Pancreas (tissue), 10 donors: ENCODE measurements at regions of chr13 and their contacts with region 1.

Region 1: DNA sequence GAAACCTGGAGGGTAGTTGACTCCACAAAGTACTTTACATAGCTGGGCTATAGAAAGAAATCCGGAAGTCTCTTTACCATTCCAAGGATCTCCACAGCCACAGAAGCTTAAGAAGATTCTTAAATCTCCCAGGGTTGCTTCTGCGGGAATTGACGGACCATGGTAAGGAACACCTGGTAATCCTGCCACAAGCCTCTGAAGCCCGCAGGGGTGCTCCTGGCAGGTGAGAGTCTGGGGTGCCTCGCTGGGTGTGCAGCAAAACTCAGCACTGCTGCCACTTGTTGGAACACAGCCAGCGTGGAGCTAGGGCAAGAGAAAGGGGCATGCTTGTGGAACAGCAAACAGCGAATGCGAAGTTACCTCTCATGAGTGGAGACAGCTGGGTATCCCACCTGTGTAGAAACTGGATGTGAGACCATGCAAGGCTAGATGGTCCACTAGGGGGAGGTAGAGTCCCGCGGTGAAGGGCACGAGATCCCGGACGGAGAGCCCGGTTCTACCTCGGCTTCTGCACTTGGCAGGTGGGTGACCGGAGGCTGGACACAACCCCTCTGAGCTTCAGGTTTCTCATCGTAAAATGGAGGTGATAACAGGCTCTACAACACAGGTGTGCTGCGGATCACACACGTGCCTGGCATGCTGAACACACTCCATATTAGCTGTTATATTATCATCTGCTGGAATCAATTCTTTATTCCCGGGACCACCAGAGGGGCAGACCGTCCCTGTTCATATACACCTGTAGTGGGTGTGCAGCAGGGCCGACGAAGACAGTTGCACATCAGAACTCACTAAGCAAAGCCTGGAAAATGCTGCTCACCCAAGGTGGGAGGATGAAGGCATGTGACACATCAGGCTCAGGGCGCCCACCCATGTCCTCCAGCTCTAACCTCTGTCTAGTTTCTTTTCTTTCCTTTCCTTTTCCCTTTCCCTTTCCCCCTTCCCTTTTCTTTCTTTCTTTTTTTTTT is 24.1 kb upstream of the UBAC2 start:
- DNase-seq: peak; percentile 50 to 84 (median 76)
- ATAC-seq: peak; percentile 87 to 100 (median 98)
- H3K4me3 ChIP-seq: no peak overlapping the region
- H3K27ac ChIP-seq: no peak overlapping the region
- H3K4me1 ChIP-seq: no peaks in the 10 kb centered on the region
- H3K27me3 ChIP-seq: no peaks in the 10 kb centered on the region
- CTCF ChIP-seq: peak; percentile 87 to 93 (median 91)

Region 2: GRCh38 chr13:97946951-97947588 is 1229.5 kb before region 1 on chr13:
- intact Hi-C with region 1: no loop called
- DNase-seq: no peak
- ATAC-seq: no peak
- H3K4me3 ChIP-seq: no peak overlapping the region
- H3K27ac ChIP-seq: no peak overlapping the region
- H3K4me1 ChIP-seq: no peaks in the 10 kb centered on the region
- H3K27me3 ChIP-seq: no peaks in the 10 kb centered on the region
- CTCF ChIP-seq: no peak

Region 3: GRCh38 chr13:98685146-98685545 is 491.4 kb before region 1 on chr13:
- intact Hi-C with region 1: no loop called
- DNase-seq: no peak
- ATAC-seq: no peak
- H3K4me3 ChIP-seq: no peak overlapping the region
- H3K27ac ChIP-seq: no peak overlapping the region
- H3K4me1 ChIP-seq: no peaks in the 10 kb centered on the region
- H3K27me3 ChIP-seq: no peaks in the 10 kb centered on the region
- CTCF ChIP-seq: no peak

Region 4: GRCh38 chr13:99264051-99264450 is 87.5 kb after region 1 on chr13:
- intact Hi-C with region 1: loop called in 2 of 3 experiments (anchors 5 kb)
- DNase-seq: no peak
- ATAC-seq: no peak
- H3K4me3 ChIP-seq: no peak overlapping the region
- H3K27ac ChIP-seq: no peak overlapping the region
- H3K4me1 ChIP-seq: no peaks in the 10 kb centered on the region
- H3K27me3 ChIP-seq: no peaks in the 10 kb centered on the region
- CTCF ChIP-seq: no peak

Region 5: GRCh38 chr13:99269627-99270241 is 93.1 kb after region 1 on chr13:
- intact Hi-C with region 1: loop called in 2 of 3 experiments (anchors 5 kb)
- DNase-seq: no peak
- ATAC-seq: peak in 3 of 4 donors; percentile 79 to 87 (median 84)
- H3K4me3 ChIP-seq: no peak overlapping the region
- H3K27ac ChIP-seq: no peak overlapping the region
- H3K4me1 ChIP-seq: no peaks in the 10 kb centered on the region
- H3K27me3 ChIP-seq: no peaks in the 10 kb centered on the region
- CTCF ChIP-seq: peak in 3 of 4 donors; percentile 21 to 23 (median 22)

Region 6: GRCh38 chr13:99436686-99437416 is 260.3 kb after region 1 on chr13:
- intact Hi-C with region 1: loop called in 2 of 3 experiments (anchors 5 kb)
- DNase-seq: peak; percentile 58 to 91 (median 81)
- ATAC-seq: peak; percentile 84 to 92 (median 86)
- H3K4me3 ChIP-seq: peak overlapping the region in 1 of 4 donors; percentile 20
- H3K27ac ChIP-seq: no peak overlapping the region
- H3K4me1 ChIP-seq: no peaks in the 10 kb centered on the region
- H3K27me3 ChIP-seq: peaks cover 0 to 3% (median 0%) of the 10 kb centered on the region in 4 donors
- CTCF ChIP-seq: peak; percentile 99 to 100 (median 100)